Activated naive CD4-positive, alpha-beta T cell treated with anti-CD3 and anti-CD28 coated beads, Interleukin-2, amount 10 ng/mL, durations not matched to agents 7 days and 5 days (primary cell): ENCODE measurements at regions of chr1 and their contacts with region 1.

Region 1: DNA sequence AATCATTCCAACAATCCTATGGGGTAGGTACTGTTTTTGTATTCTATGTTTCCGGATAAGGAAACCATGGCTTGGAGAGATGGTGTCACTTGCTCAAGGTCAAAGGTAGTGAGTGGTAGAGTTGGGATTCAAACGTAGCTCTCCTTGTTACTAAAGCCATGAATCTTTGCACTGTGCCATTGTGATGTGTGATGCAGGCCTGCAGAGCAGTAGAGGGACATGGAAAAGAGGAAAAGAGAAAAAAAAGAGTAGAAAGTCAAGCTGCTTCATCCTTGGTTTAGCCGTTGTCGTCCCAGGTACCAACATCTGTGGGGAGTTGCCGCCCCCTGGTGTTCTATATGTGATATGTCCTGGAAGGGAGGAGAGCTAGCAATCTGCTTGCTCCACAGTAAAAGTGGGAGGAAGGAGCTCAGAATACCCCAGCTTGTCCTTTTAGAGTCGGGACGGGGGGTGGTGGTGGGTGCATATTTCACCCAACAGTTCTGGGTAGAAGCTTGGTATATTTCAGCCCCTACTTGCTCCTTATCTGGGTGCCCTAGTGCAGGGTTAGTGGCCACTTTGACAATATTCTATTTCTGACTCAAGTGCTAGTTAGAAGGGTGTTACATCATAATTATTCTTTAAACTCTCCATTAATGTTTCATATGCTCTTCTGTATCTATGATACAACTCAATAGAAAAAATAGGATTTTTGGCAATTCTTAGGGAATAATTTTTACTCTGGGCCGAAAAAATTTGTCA is 98.4 kb downstream of the EBNA1BP2 start:
- DNase-seq: peak; percentile 81
- H3K4me3 Mint-ChIP-seq: no peak overlapping the region
- H3K27ac Mint-ChIP-seq: no peak overlapping the region
- H3K4me1 Mint-ChIP-seq: peaks cover 9% of the 10 kb centered on the region
- H3K27me3 Mint-ChIP-seq: peaks cover 4% of the 10 kb centered on the region

Region 2: DNA sequence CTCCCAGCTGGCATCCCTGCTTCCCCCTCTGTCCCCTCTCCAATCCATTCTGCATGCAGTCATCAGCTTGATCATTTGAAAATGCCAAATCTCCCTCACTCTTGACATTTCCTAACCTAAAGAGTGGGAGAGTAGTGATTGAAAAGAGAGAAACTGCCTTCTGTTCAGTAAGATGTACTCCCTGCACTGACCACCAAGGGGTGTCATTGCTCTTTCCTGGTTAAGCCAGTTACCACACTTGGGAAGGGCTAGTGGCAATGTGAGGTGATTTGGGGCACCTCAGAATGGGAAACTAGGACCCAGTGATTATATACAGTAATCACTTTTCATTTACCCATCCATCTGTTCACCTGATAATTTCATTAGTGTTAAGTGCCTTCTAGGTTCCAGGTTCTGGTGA is 295.8 kb before region 1 on chr1:
- CTCF ChIA-PET with region 1: interaction called, 103 read pairs
- DNase-seq: peak; percentile 59
- H3K4me3 Mint-ChIP-seq: no peak overlapping the region
- H3K27ac Mint-ChIP-seq: no peak overlapping the region
- H3K4me1 Mint-ChIP-seq: peaks cover 17% of the 10 kb centered on the region
- H3K27me3 Mint-ChIP-seq: no peaks in the 10 kb centered on the region

Region 3: GRCh38 chr1:42846257-42847110 is 227.2 kb before region 1 on chr1 and contains the start of gene ZNF691:
- CTCF ChIA-PET with region 1: interaction called, 16 read pairs
- DNase-seq: peak; percentile 95
- H3K4me3 Mint-ChIP-seq: peak within 1 kb of the TSS; percentile 88
- H3K27ac Mint-ChIP-seq: peak within 1 kb of the TSS; percentile 78
- H3K4me1 Mint-ChIP-seq: peaks cover 29% of the 10 kb centered on the region
- H3K27me3 Mint-ChIP-seq: no peaks in the 10 kb centered on the region

Region 4: DNA sequence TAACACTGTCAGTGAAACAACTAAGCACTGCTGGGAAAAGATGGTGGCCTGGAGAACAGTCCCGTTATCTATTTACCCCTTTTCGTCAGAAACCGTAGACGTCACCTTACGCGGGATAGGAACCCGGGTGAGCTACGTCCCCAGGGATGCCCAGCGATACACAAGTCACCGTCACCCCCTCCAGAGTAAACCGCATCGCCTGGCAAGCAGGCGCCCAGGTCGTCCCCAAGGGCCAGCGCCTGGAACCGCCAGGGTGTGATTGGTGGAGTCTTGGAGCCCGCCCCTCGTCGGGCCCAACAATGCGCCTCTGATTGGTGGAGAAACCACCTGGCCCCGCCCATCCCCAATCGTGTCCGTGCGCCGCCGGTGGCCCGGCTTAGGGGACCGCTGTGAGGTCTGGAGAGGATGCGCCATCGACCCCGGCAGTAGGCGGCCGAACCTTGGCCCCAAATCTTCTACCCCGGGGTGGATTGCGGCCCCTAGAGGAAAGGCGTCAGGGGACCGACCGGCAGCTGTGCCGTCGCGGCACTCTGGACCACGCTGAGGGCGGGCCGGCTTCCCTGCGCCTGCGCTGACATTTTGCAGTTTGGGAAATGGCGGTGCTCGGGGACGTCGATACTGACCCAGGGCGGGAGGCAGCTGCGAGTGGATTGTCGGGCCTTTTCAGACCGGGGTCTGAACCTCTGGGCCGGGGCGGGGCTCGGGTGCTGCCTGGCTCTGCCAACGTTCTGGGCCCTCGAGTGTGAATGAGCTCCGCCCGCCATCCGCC is 149.4 kb before region 1 on chr1:
- CTCF ChIA-PET with region 1: interaction called, 128 read pairs
- DNase-seq: peak; percentile 95
- H3K4me3 Mint-ChIP-seq: peak overlapping the region; percentile 77
- H3K27ac Mint-ChIP-seq: peak overlapping the region; percentile 89
- H3K4me1 Mint-ChIP-seq: peaks cover 57% of the 10 kb centered on the region
- H3K27me3 Mint-ChIP-seq: no peaks in the 10 kb centered on the region

Region 5: GRCh38 chr1:43058545-43059355 is 14.9 kb before region 1 on chr1:
- CTCF ChIA-PET with region 1: interaction called, 10 read pairs
- DNase-seq: peak; percentile 44
- H3K4me3 Mint-ChIP-seq: no peak overlapping the region
- H3K27ac Mint-ChIP-seq: peak overlapping the region; percentile 29
- H3K4me1 Mint-ChIP-seq: peaks cover 29% of the 10 kb centered on the region
- H3K27me3 Mint-ChIP-seq: peaks cover 15% of the 10 kb centered on the region